Adrenal gland (tissue), 19 donors: ENCODE measurements at regions of chr4 and their contacts with region 1.

Region 1: GRCh38 chr4:185471235-185472102 is at the start of gene CCDC110:
- DNase-seq: peak; percentile 94 to 98 (median 96)
- H3K4me3 ChIP-seq: peak within 1 kb of the TSS in 3 of 4 donors; percentile 62 to 81 (median 72)
- H3K27ac ChIP-seq: peak within 1 kb of the TSS in 2 of 5 donors; percentile 63 to 68
- H3K4me1 ChIP-seq: peaks cover 0 to 4% of the 10 kb centered on the region in 2 donors
- H3K27me3 ChIP-seq: no peaks in the 10 kb centered on the region
- CTCF ChIP-seq: peak; percentile 20 to 80 (median 58)
- POLR2A ChIP-seq: peak in 1 of 2 donors; percentile 40
- total RNA-seq, gene CCDC110: 0.50 to 2.7 (median 1.5) TPM in 8 of 9 donors, not detected in the other

Region 2: GRCh38 chr4:185425647-185426352 is 45.7 kb before region 1 on chr4 and contains the start of gene UFSP2:
- intact Hi-C with region 1: loop called in 1 of 2 experiments (anchors 5 kb)
- DNase-seq: peak; percentile 85 to 95 (median 91)
- H3K4me3 ChIP-seq: peak within 1 kb of the TSS; percentile 72 to 77 (median 76)
- H3K27ac ChIP-seq: peak within 1 kb of the TSS; percentile 64 to 97 (median 93)
- H3K4me1 ChIP-seq: peaks cover 8 to 36% of the 10 kb centered on the region in 2 donors
- H3K27me3 ChIP-seq: no peaks in the 10 kb centered on the region
- CTCF ChIP-seq: peak in 1 of 6 experiments; percentile 1
- POLR2A ChIP-seq: peak; percentile 31 to 70
- total RNA-seq, gene UFSP2: 19.7 to 56.4 (median 45.3) TPM

Region 3: GRCh38 chr4:185542626-185543315 is 71.3 kb after region 1 on chr4:
- intact Hi-C with region 1: no loop called
- DNase-seq: peak in 6 of 7 donors; percentile 45 to 65 (median 52)
- H3K4me3 ChIP-seq: no peak overlapping the region
- H3K27ac ChIP-seq: no peak overlapping the region
- H3K4me1 ChIP-seq: no peaks in the 10 kb centered on the region
- H3K27me3 ChIP-seq: no peaks in the 10 kb centered on the region
- CTCF ChIP-seq: no peak
- POLR2A ChIP-seq: no peak

Region 4: GRCh38 chr4:185573651-185574199 is 102.3 kb after region 1 on chr4:
- intact Hi-C with region 1: loop called in 1 of 2 experiments (anchors 10 kb)
- DNase-seq: peak; percentile 50 to 78 (median 68)
- H3K4me3 ChIP-seq: no peak overlapping the region
- H3K27ac ChIP-seq: no peak overlapping the region
- H3K4me1 ChIP-seq: peaks cover 0 to 3% of the 10 kb centered on the region in 2 donors
- H3K27me3 ChIP-seq: no peaks in the 10 kb centered on the region
- CTCF ChIP-seq: no peak
- POLR2A ChIP-seq: peak in 1 of 2 donors; percentile 32

Region 5: GRCh38 chr4:185597532-185598188 is 126.2 kb after region 1 on chr4:
- intact Hi-C with region 1: loop called in 1 of 2 experiments (anchors 5 kb)
- DNase-seq: peak; percentile 74 to 94 (median 79)
- H3K4me3 ChIP-seq: no peak overlapping the region
- H3K27ac ChIP-seq: peak overlapping the region in 2 of 5 donors; percentile 30 to 58
- H3K4me1 ChIP-seq: peaks cover 0 to 33% of the 10 kb centered on the region in 2 donors
- H3K27me3 ChIP-seq: no peaks in the 10 kb centered on the region
- CTCF ChIP-seq: peak; percentile 96 to 99 (median 98)
- POLR2A ChIP-seq: no peak